PC-3 (cell line): ENCODE measurements at regions of chr17 and their contacts with region 1.

Region 1: DNA sequence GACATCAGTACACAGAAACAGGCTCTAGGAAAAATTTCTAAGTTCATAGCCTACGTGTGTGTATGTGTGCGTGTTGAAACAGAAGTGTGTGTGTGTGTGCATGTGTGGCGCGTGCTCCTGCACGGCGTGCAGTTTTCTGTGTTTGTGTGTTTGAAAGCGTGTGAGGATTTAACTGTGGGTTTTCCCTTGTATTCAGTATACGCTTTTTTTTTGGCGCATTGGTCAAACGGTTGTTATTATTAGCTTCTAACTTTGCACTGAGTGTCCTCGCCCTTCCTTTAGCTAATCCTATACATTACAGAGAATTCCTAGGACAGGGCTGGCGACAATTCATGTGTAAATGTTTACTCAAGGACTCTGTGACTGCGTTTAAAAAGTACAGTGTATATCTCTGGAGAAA is 23.0 kb downstream of the TMC6 start:
- DNase-seq: no peak
- ATAC-seq: peak; percentile 63
- H3K4me3 ChIP-seq: no peak overlapping the region
- H3K27ac ChIP-seq: no peak overlapping the region
- H3K4me1 ChIP-seq: peaks cover 13% of the 10 kb centered on the region
- H3K27me3 ChIP-seq: no peaks in the 10 kb centered on the region
- CTCF ChIP-seq: no peak

Region 2: DNA sequence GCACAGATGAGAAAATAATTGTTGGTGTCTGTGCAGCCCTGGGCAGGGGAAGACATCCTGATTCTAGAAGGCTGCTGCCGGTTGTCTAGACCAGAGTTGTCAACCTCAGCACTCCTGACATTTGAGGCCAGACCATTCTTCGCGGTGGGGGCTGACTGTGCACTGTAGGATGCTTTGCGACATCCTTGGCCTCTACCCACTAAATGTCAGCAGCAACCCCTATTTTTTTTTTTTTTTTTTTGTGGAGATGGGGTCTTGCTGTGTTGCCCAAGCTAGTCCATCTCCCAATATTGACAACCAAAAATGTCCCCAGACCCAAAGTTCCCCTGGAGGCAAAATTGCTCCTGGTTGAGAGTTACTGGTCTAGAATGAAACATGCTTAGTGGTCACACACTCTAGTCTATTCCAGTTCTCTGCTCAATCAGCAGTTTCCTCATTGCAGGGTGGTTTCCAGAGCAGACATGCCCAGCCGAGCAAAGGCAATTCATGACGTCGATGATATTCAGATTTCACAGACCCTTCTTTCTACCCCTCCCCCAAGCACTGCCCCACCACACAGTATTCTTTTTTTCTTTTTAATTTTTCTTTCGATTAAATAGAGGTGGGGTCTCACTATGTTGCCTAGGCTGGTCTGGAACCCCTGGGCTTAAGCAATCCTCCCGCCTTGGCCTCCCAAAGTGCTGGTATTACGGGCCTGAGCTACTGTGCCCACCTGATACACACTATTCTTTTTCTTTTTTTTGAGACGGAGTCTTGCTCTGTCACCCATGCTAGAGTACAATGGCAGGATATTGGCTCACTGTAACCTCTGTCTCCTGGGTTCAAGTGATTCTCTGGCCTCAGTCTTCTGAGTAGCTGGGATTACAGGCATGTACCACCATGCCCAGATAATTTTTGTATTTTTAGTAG is 49.6 kb after region 1 on chr17:
- CTCF ChIA-PET with region 1: no interaction called
- POLR2A ChIA-PET with region 1: interaction called, 37 read pairs
- intact Hi-C with region 1: no loop called
- DNase-seq: no peak
- ATAC-seq: no peak
- H3K4me3 ChIP-seq: no peak overlapping the region
- H3K27ac ChIP-seq: no peak overlapping the region
- H3K4me1 ChIP-seq: peaks cover 19% of the 10 kb centered on the region
- H3K27me3 ChIP-seq: no peaks in the 10 kb centered on the region
- CTCF ChIP-seq: no peak

Region 3: DNA sequence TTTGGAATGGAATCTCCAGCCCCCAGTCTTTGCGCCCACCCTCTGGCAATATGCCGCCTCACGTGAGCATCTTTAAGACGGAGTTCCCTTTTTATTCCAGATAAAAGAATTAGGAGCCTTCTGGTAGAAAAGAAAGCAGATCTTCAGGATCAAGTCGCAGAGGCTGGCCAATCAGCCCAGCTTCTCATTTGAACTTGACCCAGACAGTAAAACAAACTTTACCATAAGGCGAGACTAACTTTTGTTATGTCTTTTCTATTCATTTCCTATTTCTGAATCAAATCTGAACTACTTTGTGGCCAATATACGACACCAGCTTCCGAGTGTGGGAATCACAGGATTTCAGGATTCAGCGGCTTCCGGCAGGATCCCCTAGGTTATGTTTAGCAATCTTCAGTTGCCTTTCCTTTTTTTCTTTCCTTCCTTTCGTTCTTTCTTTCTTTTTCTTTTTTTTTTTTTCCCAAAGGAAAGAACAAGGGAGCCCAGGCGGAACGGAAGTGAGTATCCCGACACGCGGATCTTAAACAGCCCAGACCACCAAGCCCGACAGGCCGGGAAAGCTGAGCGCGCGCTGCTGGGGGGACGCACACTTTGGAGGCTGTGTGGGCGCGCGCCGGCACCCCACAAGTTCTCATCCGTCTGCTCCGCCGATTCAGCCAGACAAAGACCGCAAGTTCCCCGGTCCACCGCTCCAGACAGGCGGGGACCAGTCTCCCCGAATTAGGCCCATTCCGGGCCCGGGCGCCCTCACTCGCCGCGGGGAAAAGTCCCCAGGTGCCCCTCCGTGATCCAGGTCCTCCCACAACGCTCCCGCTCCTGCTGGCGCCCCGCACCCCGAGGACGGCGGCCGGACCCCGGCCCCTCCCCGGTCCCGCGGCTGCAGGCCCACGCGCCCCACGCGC is 1929.5 kb after region 1 on chr17:
- CTCF ChIA-PET with region 1: no interaction called
- POLR2A ChIA-PET with region 1: interaction called, 15 read pairs
- intact Hi-C with region 1: no loop called
- DNase-seq: peak; percentile 31
- ATAC-seq: peak; percentile 1
- H3K4me3 ChIP-seq: peak overlapping the region; percentile 84
- H3K27ac ChIP-seq: no peak overlapping the region
- H3K4me1 ChIP-seq: peaks cover 27% of the 10 kb centered on the region
- H3K27me3 ChIP-seq: no peaks in the 10 kb centered on the region
- CTCF ChIP-seq: no peak